Posterior cingulate gyrus (tissue), 11 donors: ENCODE measurements at regions of chr2 and their contacts with region 1.

Region 1: GRCh38 chr2:160324161-160324800 is 124.2 kb upstream of the ITGB6 start:
- DNase-seq: peak in 4 of 10 donors; percentile 13 to 30 (median 22)

Region 2: DNA sequence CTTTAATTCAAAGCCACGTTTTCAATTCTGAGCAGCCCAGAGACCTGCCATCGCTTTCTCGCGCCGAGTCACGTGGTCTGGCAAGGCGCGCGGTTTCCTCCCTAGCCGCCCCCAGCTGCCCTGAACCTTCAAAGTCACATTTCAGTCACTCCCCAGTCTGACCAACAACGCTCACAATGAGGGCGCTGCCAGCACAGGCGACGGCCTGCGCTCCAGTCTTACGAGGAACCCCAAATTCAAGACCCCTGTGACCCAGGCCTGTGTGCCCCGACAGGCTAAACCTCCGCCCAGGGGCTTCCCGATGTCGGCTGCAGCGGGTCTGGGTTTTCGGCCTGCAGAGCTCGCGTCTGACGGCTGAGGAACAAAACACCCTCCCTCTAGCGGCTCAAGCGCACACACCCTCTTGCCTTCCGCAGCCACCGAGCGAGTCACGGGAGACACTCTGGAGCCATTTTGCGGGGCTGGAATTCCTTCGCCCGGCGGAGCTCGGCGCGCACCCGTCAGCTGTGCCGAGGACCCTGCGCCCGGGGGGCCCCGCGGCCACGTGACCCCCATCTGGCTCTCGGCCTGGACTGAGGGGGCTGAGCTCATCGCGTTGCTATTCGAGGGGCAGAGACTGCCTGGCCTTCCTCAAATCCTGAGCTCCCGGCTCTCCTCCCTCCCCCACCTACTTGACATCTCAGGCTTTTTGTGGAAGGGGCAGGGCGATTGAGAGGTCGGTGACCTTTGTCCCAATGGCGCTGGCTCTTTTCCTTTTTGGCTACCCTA is 54.3 kb before region 1 on chr2:
- intact Hi-C with region 1: no loop called
- DNase-seq: peak; percentile 38 to 93 (median 66)

Region 3: GRCh38 chr2:160869411-160869810 is 545.1 kb after region 1 on chr2:
- intact Hi-C with region 1: no loop called
- DNase-seq: no peak

Region 4: GRCh38 chr2:160884056-160884455 is 559.8 kb after region 1 on chr2:
- intact Hi-C with region 1: no loop called
- DNase-seq: no peak

Region 5: DNA sequence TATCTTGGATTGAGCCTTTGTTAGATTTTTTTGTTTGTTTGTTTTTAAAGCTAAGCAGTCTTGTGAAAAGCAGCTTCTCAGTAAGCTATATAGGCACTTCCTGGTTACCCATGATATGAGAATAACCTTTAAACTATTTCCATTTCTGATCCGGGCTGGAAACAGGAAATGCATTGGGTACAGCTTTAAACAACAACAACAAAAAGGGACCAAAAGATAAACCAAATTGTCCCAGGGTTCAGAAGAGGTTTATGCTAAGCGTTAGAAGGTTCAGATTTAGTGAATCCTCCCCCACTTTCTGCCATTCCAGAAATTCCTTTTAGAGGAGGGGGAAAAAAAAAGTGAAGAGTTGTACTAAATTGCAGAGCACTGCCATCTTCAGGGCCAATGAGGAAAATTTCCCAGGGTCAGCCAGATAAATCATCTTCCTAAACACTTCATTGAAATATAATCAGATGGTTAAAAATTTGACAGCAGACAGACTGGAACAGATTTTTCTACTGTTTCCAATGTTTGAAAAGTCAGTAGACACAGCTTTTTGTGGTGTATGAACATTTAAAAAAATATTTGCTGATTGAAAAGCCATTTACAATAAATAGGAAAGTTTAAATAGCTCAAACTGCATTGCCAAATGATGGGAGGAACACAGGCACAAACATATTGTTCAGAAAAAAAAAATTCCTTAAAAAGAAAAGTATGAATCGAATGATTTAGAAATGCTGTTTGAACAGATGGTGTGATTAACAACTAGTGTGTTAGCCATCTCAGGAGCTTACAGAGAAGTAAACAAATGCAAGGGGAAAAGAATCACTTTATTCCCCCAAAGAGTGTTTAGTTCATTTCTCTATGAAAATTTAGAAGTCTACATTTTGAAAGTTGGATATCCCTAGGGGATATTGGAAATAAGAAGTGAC is 646.0 kb after region 1 on chr2:
- intact Hi-C with region 1: loop called (anchors 10 kb)
- DNase-seq: no peak